MCF 10A (cell line): ENCODE measurements at regions of chr16 and their contacts with region 1.

Region 1: GRCh38 chr16:20300312-20301097 is 26.8 kb downstream of the GP2 start:
- DNase-seq: peak; percentile 68
- H3K4me3 Mint-ChIP-seq: no peak overlapping the region
- H3K27ac Mint-ChIP-seq: no peak overlapping the region
- H3K4me1 Mint-ChIP-seq: no peaks in the 10 kb centered on the region
- H3K27me3 Mint-ChIP-seq: peaks cover 54% of the 10 kb centered on the region
- CTCF ChIP-seq: peak; percentile 74

Region 2: DNA sequence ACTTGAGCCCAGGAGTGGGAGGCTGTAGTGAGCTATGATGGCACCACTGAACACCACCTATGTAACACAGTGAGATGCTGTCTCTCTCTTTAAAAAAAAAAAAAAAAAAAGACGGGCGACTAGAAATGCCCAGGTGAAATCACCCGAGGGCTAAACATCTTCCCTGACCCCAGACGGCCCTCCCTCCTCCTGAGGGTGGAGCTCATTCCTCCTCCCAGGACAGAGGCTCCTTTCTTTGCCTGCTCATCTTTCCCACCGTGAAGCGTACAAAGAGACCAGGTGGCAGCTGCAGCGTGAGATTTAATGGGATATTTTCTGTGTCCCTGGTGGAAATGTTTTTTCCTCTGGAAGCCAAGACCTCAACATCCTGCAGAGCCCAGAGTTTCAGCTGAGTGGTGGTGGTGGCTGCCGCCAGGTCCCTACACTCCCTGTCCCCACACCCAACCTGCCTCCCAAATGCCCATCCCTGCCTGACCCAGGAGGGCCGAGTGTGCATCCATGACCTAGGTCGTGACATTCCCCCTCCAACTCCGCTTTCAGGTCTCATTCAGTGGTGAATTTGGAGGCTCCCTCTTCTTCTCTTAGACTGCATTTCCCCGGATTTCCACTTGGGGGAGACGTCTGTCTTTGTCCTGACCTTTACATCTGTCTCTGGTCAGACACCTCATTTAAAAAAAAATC is 401.4 kb before region 1 on chr16:
- CTCF ChIA-PET with region 1: interaction called, 456 read pairs
- POLR2A ChIA-PET with region 1: no interaction called
- intact Hi-C with region 1: loop called (anchors 2 kb)
- DNase-seq: peak; percentile 73
- H3K4me3 Mint-ChIP-seq: no peak overlapping the region
- H3K27ac Mint-ChIP-seq: no peak overlapping the region
- H3K4me1 Mint-ChIP-seq: no peaks in the 10 kb centered on the region
- H3K27me3 Mint-ChIP-seq: no peaks in the 10 kb centered on the region
- CTCF ChIP-seq: peak; percentile 71

Region 3: GRCh38 chr16:19963301-19963700 is 337.2 kb before region 1 on chr16:
- CTCF ChIA-PET with region 1: interaction called, 11 read pairs
- POLR2A ChIA-PET with region 1: no interaction called
- intact Hi-C with region 1: no loop called
- DNase-seq: no peak
- H3K4me3 Mint-ChIP-seq: no peak overlapping the region
- H3K27ac Mint-ChIP-seq: no peak overlapping the region
- H3K4me1 Mint-ChIP-seq: no peaks in the 10 kb centered on the region
- H3K27me3 Mint-ChIP-seq: peaks cover 22% of the 10 kb centered on the region
- CTCF ChIP-seq: no peak

Region 4: GRCh38 chr16:19980632-19981265 is 319.8 kb before region 1 on chr16:
- CTCF ChIA-PET with region 1: interaction called, 4 read pairs
- POLR2A ChIA-PET with region 1: no interaction called
- intact Hi-C with region 1: loop called (anchors 2 kb)
- DNase-seq: peak; percentile 6
- H3K4me3 Mint-ChIP-seq: no peak overlapping the region
- H3K27ac Mint-ChIP-seq: no peak overlapping the region
- H3K4me1 Mint-ChIP-seq: no peaks in the 10 kb centered on the region
- H3K27me3 Mint-ChIP-seq: peaks cover 11% of the 10 kb centered on the region
- CTCF ChIP-seq: peak; percentile 32

Region 5: DNA sequence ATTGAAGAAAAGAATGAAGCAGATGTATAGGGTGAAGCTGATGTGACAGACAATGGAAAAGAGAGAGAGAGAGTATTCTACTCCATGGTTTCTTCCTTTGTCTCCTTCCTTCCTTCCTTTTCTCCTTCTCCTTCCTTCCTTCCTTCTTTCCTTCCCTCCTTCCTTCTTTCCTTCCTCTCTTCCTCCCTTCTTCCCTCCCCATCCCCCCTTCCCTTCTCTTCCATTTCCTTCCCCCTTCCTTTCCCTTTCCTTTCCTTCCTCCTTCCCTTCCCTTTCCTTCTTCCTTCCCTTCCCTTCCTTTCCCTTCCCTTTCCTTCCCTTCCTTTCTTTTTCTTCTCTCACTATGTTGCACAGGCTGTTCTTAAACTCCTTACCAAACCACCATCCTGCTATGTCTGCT is 171.1 kb before region 1 on chr16:
- CTCF ChIA-PET with region 1: no interaction called
- POLR2A ChIA-PET with region 1: no interaction called
- intact Hi-C with region 1: no loop called
- DNase-seq: no peak
- H3K4me3 Mint-ChIP-seq: no peak overlapping the region
- H3K27ac Mint-ChIP-seq: no peak overlapping the region
- H3K4me1 Mint-ChIP-seq: no peaks in the 10 kb centered on the region
- H3K27me3 Mint-ChIP-seq: peaks cover 53% of the 10 kb centered on the region
- CTCF ChIP-seq: no peak

Region 6: DNA sequence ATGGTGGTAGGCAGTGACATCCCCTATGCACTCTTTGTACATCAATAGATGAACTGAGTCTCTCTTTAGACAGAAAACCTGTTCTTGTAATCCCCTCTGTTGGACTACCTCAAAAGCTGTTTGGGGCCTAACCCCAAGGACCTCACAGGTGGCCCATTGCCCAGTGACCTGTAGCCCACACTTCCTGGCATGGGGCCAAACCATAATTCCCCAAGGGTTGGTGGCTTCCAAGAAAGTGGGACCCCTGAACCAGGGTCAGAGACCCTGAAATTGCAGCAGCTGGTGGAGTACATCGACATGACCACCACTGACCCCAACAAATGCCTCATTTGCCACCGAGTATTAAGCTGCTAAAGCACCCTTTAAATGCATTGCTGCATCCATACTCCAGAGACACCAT is 143.7 kb before region 1 on chr16:
- CTCF ChIA-PET with region 1: no interaction called
- POLR2A ChIA-PET with region 1: no interaction called
- intact Hi-C with region 1: no loop called
- DNase-seq: no peak
- H3K4me3 Mint-ChIP-seq: no peak overlapping the region
- H3K27ac Mint-ChIP-seq: no peak overlapping the region
- H3K4me1 Mint-ChIP-seq: no peaks in the 10 kb centered on the region
- H3K27me3 Mint-ChIP-seq: no peaks in the 10 kb centered on the region
- CTCF ChIP-seq: no peak

Region 7: DNA sequence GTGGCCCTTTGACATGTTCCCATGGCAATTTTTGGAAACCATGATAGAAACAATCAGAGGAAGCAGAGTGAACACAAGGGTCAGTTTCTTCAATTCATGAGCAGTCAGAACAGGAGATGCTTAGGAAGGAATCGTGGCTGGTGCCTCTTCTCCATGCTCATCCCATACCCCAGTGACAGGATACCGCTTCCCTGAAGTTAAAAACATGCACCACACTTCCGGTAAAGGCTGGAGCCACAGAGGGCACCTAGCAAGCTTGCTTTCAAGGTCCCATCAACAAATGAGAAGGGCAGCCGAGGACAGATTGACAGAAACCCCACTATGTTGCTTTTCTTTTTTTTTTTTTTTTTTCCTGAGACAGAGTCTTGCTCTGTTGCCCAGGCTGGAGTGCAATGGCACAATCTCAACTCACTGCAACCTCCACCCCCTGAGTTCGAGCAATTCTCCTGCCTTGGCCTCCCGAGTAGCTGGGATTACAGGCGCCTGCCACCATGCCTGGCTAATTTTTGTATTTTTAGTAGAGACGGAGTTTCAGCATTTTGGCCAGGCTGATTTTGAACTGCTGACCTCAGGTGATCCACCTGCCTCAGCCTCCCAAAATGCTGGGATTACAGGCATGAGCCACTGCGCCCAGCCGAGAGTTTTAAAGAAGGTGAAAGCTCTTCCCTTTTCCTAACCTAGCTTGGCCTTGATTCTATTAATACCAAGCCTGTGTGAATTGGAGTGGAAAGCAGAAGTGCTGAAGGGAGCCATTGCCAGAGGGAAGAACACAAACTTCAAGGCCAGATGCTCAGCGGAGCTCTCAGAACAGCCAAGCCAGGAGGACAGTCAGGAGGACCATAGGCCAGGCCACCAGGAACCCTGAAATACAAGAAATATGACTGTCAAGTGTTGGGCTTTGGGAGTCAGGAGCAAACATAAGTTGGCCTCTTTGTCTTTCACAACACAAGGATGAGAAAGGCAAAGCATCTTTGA is 10.2 kb after region 1 on chr16:
- CTCF ChIA-PET with region 1: interaction called, 18 read pairs
- POLR2A ChIA-PET with region 1: no interaction called
- intact Hi-C with region 1: no loop called
- DNase-seq: no peak
- H3K4me3 Mint-ChIP-seq: no peak overlapping the region
- H3K27ac Mint-ChIP-seq: no peak overlapping the region
- H3K4me1 Mint-ChIP-seq: no peaks in the 10 kb centered on the region
- H3K27me3 Mint-ChIP-seq: peaks cover 6% of the 10 kb centered on the region
- CTCF ChIP-seq: no peak